ENCODE measurements at regions of chr11 and their contacts with region 1.

Region 1: GRCh38 chr11:79600711-79601110 is 159.9 kb upstream of the TENM4 start:
- DNase-seq: no peak
- H3K4me3 ChIP-seq: no peak overlapping the region
- H3K27ac ChIP-seq: no peak overlapping the region
- H3K4me1 ChIP-seq: no peaks in the 10 kb centered on the region
- H3K27me3 ChIP-seq: peaks cover 13% of the 10 kb centered on the region
- CTCF ChIP-seq: no peak

Region 2: DNA sequence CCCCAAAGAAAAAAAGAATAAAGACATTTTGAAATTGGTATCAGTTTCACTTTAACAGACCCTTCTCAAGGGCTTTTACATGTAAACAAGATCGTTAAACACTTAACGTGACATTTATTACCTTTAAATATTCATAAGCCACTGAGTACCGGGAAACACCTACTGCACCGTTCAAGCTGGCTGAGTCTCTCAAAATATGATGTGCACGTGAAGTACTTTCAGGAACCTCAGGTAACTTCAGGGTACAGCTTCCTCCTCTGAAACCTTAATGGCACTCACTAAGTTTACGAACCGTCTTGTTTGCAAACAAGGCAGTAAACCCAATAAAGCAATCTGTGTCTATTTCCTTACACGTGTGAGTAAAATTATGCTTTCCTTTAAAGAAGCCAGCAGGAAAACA is 54.4 kb before region 1 on chr11:
- CTCF ChIA-PET with region 1: no interaction called
- POLR2A ChIA-PET with region 1: no interaction called
- intact Hi-C with region 1: loop called (anchors 10 kb)
- DNase-seq: no peak
- H3K4me3 ChIP-seq: no peak overlapping the region
- H3K27ac ChIP-seq: no peak overlapping the region
- H3K4me1 ChIP-seq: no peaks in the 10 kb centered on the region
- H3K27me3 ChIP-seq: peaks cover 37% of the 10 kb centered on the region
- CTCF ChIP-seq: no peak

Region 3: GRCh38 chr11:79615425-79615824 is 14.7 kb after region 1 on chr11:
- CTCF ChIA-PET with region 1: no interaction called
- POLR2A ChIA-PET with region 1: interaction called, 18 read pairs
- intact Hi-C with region 1: no loop called
- DNase-seq: no peak
- H3K4me3 ChIP-seq: no peak overlapping the region
- H3K27ac ChIP-seq: no peak overlapping the region
- H3K4me1 ChIP-seq: no peaks in the 10 kb centered on the region
- H3K27me3 ChIP-seq: peaks cover 14% of the 10 kb centered on the region
- CTCF ChIP-seq: no peak